ENCODE measurements at regions of chr22 and their contacts with region 1.

Region 1: DNA sequence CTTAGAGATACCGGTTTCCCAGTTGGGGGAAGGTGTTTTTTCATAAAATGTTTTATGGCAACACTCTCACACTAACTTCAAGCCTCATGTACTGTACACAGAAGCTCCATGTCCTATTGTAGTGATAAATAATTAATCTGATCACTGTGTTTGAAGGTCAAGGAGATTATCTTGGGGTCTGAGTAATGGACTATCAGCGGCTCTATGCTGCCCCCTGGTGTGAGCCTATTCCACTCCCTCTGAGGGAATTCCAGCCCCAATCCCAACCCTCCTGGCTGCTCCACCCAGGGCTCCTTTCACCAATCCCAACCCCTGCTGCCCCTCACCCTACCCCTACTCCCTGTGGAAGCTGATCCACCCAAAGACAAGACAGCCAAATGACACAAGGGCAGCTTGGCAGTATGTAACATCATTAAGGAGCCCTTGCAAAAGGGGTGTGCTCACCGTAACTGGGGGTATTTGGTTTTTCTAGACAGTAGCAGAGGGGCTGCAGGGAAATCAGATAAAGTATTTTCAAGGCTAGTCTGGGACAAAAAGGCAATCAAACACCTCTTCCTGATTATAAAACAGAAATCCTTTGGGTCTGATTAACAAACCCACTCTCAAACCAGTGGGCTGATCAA is 22.3 kb downstream of the HPS4 start:
- DNase-seq: peak; percentile 53
- H3K4me3 ChIP-seq: no peak overlapping the region
- H3K27ac ChIP-seq: no peak overlapping the region
- H3K4me1 ChIP-seq: peaks cover 13% of the 10 kb centered on the region
- H3K27me3 ChIP-seq: no peaks in the 10 kb centered on the region
- CTCF ChIP-seq: peak; percentile 75 to 90
- POLR2A ChIP-seq: no peak

Region 2: GRCh38 chr22:26398741-26399153 is 62.6 kb before region 1 on chr22:
- CTCF ChIA-PET with region 1: interaction called, 76 read pairs
- POLR2A ChIA-PET with region 1: interaction called, 3 read pairs
- dilution Hi-C with region 1: no loop called
- intact Hi-C with region 1: loop called (anchors 1 kb)
- DNase-seq: peak; percentile 72
- H3K4me3 ChIP-seq: no peak overlapping the region
- H3K27ac ChIP-seq: no peak overlapping the region
- H3K4me1 ChIP-seq: no peaks in the 10 kb centered on the region
- H3K27me3 ChIP-seq: peaks cover 4 to 8% of the 10 kb centered on the region in 2 experiments
- CTCF ChIP-seq: peak; percentile 68 to 72
- POLR2A ChIP-seq: no peak

Region 3: DNA sequence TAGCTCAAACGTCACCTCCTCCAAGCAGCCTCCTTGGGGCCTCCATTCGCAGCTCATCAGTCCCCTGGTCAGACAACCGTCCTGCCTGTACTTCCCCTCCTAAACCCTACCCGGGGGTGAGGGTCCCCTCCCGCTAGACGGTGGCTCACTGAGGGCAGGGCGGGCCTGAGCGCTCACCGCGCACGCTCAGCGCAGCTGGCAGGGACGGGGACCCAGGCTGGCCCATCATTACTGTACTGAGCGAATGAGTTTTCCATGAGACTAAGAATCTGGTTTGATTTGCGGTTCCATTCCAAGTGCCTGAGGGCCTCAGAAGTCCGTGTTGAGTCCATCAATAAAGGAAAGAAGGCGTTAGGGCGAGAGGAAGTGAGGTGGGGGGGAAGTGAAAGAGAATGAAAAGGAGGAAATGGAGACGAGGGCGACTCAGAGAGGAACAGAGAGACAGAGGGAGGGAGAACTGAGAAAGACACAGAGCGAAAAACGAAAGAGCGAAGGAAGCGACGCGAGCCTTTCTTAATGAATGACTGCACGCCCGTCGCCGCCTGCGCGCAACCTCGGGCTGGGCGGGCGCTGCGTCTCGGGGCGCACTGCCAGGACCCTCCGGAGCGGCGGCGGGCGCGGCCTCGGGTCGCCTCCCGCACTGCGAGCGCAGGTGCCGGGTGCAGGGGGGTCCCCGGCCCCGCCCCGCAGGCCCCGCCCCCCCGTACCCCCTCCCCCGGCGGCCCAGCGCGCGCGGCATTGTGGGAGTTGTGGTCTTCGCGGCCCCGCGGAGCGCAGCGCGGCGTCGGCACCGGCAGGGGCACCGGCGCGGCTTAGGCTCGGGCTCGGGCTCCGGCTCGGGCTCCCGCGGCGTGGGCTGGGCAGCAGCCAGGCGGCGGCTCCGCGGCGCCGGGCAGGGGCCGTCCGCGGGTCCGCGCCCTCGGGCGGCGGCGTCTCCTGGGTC is 32.5 kb before region 1 on chr22 and contains the start of gene ASPHD2:
- CTCF ChIA-PET with region 1: interaction called, 4 read pairs
- POLR2A ChIA-PET with region 1: no interaction called
- dilution Hi-C with region 1: no loop called
- intact Hi-C with region 1: loop called (anchors 5 kb)
- DNase-seq: peak; percentile 64
- H3K4me3 ChIP-seq: peak within 1 kb of the TSS; percentile 17 to 69 (median 55)
- H3K27ac ChIP-seq: peak within 1 kb of the TSS; percentile 6
- H3K4me1 ChIP-seq: peaks cover 14% of the 10 kb centered on the region
- H3K27me3 ChIP-seq: peaks cover 5 to 17% of the 10 kb centered on the region in 2 experiments
- CTCF ChIP-seq: no peak
- POLR2A ChIP-seq: peak; percentile 69
- total RNA-seq, gene ASPHD2: 5.5 and 7.8 TPM in 2 replicates

Region 4: GRCh38 chr22:26563022-26563421 is 101.7 kb after region 1 on chr22:
- CTCF ChIA-PET with region 1: no interaction called
- POLR2A ChIA-PET with region 1: no interaction called
- dilution Hi-C with region 1: no loop called
- intact Hi-C with region 1: no loop called
- DNase-seq: no peak
- H3K4me3 ChIP-seq: no peak overlapping the region
- H3K27ac ChIP-seq: no peak overlapping the region
- H3K4me1 ChIP-seq: peaks cover 14% of the 10 kb centered on the region
- H3K27me3 ChIP-seq: no peaks in the 10 kb centered on the region
- CTCF ChIP-seq: no peak
- POLR2A ChIP-seq: no peak